Ovary (tissue), 10 donors: ENCODE measurements at regions of chr19 and their contacts with region 1.

Region 1: GRCh38 chr19:3324321-3324856 is 42.0 kb upstream of the NFIC start:
- DNase-seq: peak in 4 of 5 donors; percentile 60 to 72 (median 66)
- H3K4me3 ChIP-seq: no peak overlapping the region
- H3K27ac ChIP-seq: no peak overlapping the region
- H3K4me1 ChIP-seq: no peaks in the 10 kb centered on the region
- H3K27me3 ChIP-seq: no peaks in the 10 kb centered on the region
- CTCF ChIP-seq: peak; percentile 36 to 57 (median 45)
- EP300 ChIP-seq: no peak
- POLR2A ChIP-seq: no peak

Region 2: GRCh38 chr19:3163230-3163886 is 161.0 kb before region 1 on chr19:
- intact Hi-C with region 1: no loop called
- DNase-seq: peak; percentile 62 to 77 (median 74)
- H3K4me3 ChIP-seq: no peak overlapping the region
- H3K27ac ChIP-seq: no peak overlapping the region
- H3K4me1 ChIP-seq: peaks cover 2% of the 10 kb centered on the region
- H3K27me3 ChIP-seq: no peaks in the 10 kb centered on the region
- CTCF ChIP-seq: peak; percentile 81 to 90 (median 89)
- EP300 ChIP-seq: no peak
- POLR2A ChIP-seq: no peak

Region 3: GRCh38 chr19:3275583-3276340 is 48.6 kb before region 1 on chr19:
- intact Hi-C with region 1: no loop called
- DNase-seq: peak in 4 of 5 donors; percentile 43 to 65 (median 63)
- H3K4me3 ChIP-seq: no peak overlapping the region
- H3K27ac ChIP-seq: no peak overlapping the region
- H3K4me1 ChIP-seq: no peaks in the 10 kb centered on the region
- H3K27me3 ChIP-seq: no peaks in the 10 kb centered on the region
- CTCF ChIP-seq: no peak
- EP300 ChIP-seq: no peak
- POLR2A ChIP-seq: no peak

Region 4: DNA sequence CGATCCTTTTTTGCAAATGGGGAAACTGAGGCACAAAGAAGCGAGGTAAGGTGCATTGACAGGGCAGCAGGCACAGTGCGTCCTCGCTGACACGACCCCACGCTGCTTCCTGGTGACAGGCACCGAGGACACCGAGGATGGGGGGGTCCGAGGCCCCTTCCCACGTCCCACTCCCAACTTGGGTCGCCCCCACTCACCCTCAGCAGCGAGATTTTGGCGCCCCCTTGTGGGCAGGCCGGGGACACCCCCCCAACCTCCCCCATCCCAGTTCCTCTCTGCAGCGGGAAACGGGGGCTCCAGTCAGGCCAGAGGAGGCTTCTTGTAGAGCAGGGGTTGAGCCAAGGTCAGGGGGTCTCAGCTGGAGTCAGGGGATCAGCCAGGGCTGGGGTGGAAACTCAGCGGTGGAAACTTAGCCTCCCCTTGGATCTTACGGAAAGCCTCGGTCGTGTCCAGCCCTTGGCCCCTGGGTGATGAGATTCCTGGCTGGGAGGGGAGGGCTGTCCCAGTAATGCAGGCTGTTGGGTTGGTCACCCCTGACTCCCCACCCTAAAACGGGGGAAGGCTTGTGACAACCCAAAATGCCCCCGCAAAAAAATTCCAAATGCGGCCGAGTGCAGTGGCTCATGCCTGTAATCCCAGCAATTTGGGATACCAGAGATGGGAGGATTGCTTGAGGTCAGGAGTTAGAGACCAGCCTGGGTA is 147.7 kb after region 1 on chr19:
- intact Hi-C with region 1: loop called in 3 of 4 experiments (anchors 2 kb)
- DNase-seq: peak in 4 of 5 donors; percentile 62 to 76 (median 70)
- H3K4me3 ChIP-seq: no peak overlapping the region
- H3K27ac ChIP-seq: no peak overlapping the region
- H3K4me1 ChIP-seq: peaks cover 5% of the 10 kb centered on the region
- H3K27me3 ChIP-seq: no peaks in the 10 kb centered on the region
- CTCF ChIP-seq: peak; percentile 65 to 88 (median 81)
- EP300 ChIP-seq: no peak
- POLR2A ChIP-seq: no peak

Region 5: GRCh38 chr19:3479177-3479833 is 154.9 kb after region 1 on chr19:
- intact Hi-C with region 1: loop called in 2 of 4 experiments (anchors 2 to 5 kb)
- DNase-seq: no peak
- H3K4me3 ChIP-seq: no peak overlapping the region
- H3K27ac ChIP-seq: no peak overlapping the region
- H3K4me1 ChIP-seq: no peaks in the 10 kb centered on the region
- H3K27me3 ChIP-seq: no peaks in the 10 kb centered on the region
- CTCF ChIP-seq: no peak
- EP300 ChIP-seq: no peak
- POLR2A ChIP-seq: no peak

Region 6: DNA sequence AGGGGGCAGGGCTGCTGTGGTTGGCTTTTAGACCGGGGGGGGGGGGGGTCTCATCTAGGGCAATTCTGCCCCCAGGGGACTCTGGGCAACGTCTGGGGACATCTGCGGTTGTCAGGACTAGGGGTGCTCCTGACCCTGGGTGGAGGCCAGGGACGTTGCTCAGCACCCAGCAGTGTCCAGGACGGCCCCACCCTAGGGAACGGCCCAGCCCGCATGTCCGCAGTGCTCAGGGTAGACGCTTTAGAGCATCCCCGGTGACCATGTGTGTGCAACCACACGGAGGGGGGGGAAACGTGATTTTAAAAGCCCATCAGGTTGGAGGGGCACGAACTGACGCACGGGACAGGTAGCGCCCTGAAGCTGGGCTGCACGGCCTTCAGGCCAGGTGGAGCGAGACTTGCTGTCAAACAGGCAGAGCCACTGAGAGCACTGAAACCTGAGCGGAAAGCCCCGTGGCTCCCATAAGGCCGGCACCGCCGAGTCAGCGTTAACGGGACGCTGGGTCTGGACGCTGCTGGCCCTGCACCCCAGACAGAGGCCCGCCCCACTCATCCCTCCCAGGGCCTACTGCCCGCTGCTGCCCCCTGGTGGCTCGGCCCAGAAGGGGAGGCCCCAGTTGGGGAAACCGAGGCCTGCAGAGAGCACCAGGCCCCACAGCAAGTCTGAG is 293.9 kb after region 1 on chr19:
- intact Hi-C with region 1: loop called in 1 of 4 experiments (anchors 10 kb)
- DNase-seq: peak; percentile 68 to 82 (median 77)
- H3K4me3 ChIP-seq: no peak overlapping the region
- H3K27ac ChIP-seq: no peak overlapping the region
- H3K4me1 ChIP-seq: peaks cover 1% of the 10 kb centered on the region
- H3K27me3 ChIP-seq: no peaks in the 10 kb centered on the region
- CTCF ChIP-seq: peak; percentile 75 to 89 (median 88)
- EP300 ChIP-seq: no peak
- POLR2A ChIP-seq: no peak